KBM-7 (cell line): ENCODE measurements at regions of chr4 and their contacts with region 1.

Region 1: DNA sequence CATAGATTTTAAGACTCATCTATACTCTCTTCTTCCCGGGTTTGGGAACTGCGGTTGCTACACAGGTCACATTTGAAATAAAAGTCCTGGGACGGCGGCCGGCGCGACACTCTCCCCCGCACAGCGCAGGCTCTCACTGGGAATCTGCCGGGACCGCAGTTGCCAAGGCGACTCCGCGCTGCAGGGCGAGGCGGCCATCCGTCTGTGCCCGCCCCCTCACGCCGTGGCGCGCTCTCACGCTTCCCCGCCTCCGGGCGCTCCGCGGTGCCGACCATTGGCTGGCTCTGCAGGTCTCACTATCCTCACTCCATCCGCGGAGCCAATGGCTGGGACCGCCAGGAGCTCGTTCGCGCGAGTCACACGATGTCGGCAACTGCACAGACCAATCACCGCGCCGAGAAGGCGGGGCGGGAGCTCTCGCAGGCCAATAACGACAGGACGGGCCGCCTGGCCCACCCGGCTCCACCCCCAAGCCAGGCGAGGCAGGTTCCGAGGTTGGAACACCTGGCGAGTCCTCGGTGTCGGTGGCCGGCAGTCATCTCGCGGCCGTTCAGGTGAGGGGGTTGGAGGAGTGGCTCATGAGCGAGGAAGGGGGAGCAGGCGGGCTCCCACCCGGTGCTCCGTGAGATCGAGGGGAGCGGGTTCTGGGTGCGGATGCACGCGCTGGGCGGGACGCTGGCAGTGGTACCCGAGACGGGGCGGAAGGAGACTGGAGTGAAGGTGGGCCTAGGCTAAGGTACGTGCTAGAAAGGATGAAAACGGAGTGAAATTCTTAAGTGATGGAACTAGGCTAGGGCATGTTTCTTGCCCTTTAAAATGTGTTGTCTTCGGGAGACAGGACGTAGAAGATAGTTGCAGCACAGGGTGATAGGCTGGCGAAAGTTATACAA is at the start of gene MSMO1:
- DNase-seq: peak; percentile 99

Region 2: GRCh38 chr4:164212134-164212533 is 1115.3 kb before region 1 on chr4:
- in situ Hi-C with region 1: no loop called
- DNase-seq: no peak

Region 3: GRCh38 chr4:165131247-165131832 is 196.1 kb before region 1 on chr4:
- in situ Hi-C with region 1: loop called (anchors 25 kb)
- DNase-seq: peak; percentile 85

Region 4: DNA sequence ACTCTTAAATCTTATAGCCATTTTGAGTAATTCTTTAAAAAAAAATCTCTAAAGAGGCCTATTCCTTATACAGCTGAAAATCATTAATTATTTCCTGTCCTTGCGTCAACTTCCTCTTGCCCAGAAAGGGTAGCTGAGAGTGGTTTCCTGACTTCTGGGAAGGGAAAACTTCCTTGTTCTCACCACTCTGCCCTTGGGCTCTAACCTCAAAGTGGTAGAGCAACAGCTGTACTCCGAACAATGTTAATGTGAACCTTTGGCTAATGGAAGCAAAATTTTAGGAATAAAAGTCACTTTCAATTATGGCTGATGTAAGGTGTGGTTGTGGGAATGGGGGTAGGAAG is 104.8 kb before region 1 on chr4:
- in situ Hi-C with region 1: no loop called
- DNase-seq: peak; percentile 56